WTC11 (cell line): ENCODE measurements at regions of chr22 and their contacts with region 1.

Region 1: GRCh38 chr22:38124236-38124974 is 13.9 kb upstream of the BAIAP2L2 start:
- DNase-seq: no peak
- ATAC-seq: peak; percentile 81
- H3K4me3 Mint-ChIP-seq: no peak overlapping the region
- H3K27ac Mint-ChIP-seq: peak overlapping the region; percentile 69
- H3K4me1 Mint-ChIP-seq: peaks cover 7% of the 10 kb centered on the region
- H3K27me3 Mint-ChIP-seq: no peaks in the 10 kb centered on the region
- CTCF ChIP-seq: no peak

Region 2: DNA sequence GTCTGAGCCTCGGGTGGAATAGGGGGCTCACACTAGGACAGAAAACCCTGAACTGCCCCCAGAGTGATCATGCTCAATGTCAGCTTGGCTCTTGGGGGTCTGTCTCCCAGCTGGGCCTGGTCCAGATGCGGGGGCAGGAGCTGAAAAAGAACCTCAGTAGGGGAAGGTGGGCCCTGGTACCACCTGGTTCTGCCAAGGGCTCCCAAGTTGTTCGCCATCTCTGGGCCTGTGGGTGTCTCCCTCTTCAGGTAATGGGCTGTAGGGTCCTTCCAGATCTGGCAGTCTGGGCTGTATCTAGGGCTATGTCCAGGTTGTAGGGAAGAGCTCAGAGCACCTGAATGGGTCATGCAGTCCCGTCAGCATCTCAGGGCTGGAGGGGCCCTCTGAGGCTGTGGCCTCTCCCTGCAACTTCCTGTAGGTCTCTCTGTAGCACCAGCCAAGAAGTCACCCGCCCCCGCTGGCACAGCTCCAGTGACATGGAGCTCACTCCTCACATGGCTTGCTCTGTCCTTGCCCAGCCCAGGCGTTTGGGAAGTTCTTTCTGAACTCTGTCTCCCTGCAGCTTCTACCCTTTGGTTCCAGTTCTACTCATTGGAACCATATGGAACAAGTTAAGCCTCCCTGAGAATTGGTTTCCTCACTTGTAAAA is 107.0 kb before region 1 on chr22:
- CTCF ChIA-PET with region 1: no interaction called
- POLR2A ChIA-PET with region 1: no interaction called
- DNase-seq: no peak
- ATAC-seq: peak; percentile 26
- H3K4me3 Mint-ChIP-seq: no peak overlapping the region
- H3K27ac Mint-ChIP-seq: no peak overlapping the region
- H3K4me1 Mint-ChIP-seq: 0 out of 2 replicates have a peak, but pooled peaks cover 4% of the 10 kb centered on the region
- H3K27me3 Mint-ChIP-seq: peaks cover 12% of the 10 kb centered on the region
- CTCF ChIP-seq: no peak

Region 3: DNA sequence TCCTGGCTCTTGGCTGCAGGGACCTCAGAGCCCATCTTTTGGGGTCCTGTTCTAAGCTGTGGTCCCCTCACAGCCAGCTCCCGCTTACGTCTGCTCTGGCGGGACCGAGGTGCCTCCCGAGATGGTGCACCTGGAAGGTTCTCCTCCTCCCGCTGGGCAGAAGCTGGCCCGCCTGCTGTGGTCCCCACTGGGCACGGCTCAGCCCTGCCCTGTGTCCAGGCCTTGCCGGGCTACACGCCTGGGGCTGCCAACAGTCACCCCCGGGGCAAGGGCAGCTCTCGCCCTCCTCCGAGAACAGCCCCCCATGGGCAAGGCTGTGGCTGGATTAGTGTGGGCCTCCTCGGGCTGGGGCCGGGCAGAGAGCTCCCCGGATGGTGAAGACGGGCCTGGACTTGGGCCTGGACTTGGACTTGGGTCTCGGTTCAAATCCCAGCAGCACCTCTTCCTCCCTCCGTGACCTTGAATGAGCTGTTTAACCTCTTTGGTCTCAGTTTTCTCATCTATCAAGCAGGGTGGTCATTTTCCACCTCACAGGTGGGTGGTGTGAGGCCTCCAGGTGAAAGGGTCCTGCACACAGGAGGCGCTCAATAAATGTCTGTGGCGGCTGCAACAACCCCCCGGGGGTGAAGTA is 14.9 kb before region 1 on chr22:
- CTCF ChIA-PET with region 1: interaction called, 46 read pairs
- POLR2A ChIA-PET with region 1: no interaction called
- DNase-seq: no peak
- ATAC-seq: no peak
- H3K4me3 Mint-ChIP-seq: no peak overlapping the region
- H3K27ac Mint-ChIP-seq: no peak overlapping the region
- H3K4me1 Mint-ChIP-seq: peaks cover 6% of the 10 kb centered on the region
- H3K27me3 Mint-ChIP-seq: no peaks in the 10 kb centered on the region; the same call in 1 of the 2 replicates
- CTCF ChIP-seq: no peak

Region 4: GRCh38 chr22:38136584-38136983 is 12.2 kb after region 1 on chr22:
- CTCF ChIA-PET with region 1: interaction called, 11 read pairs
- POLR2A ChIA-PET with region 1: no interaction called
- DNase-seq: no peak
- ATAC-seq: no peak
- H3K4me3 Mint-ChIP-seq: no peak overlapping the region
- H3K27ac Mint-ChIP-seq: no peak overlapping the region
- H3K4me1 Mint-ChIP-seq: no peaks in the 10 kb centered on the region
- H3K27me3 Mint-ChIP-seq: no peaks in the 10 kb centered on the region
- CTCF ChIP-seq: no peak

Region 5: DNA sequence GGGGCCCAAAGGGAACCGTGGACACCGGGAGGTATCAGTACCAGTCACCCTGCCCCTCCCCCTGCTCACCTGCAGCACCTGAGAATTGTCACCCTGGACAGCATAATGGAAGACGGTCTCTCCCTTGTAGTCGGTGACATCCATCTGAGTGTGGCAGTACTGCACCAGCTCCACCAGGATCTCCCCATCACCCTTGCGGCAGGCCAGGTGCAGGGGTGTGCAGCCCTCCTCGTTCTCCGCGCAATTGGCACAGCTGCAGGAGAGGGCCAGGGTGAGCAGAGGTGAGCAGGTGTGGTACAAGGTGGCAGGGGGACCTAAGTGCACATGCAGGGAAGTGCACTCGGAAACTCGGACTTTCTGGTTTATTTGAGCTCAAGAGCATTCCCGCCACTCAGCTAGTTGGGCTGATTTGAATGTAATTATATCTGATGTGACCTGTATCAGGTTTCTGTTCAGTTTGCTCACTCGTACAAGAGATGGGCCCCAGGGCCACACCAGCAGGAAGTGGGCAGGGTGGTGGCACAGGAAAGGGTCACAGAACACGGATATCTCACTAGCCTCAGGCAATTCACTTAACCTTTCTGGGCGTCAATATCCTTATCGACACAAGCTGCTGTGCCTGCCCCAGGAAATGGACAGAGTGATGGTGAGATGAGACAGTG is 18.8 kb after region 1 on chr22:
- CTCF ChIA-PET with region 1: interaction called, 28 read pairs
- POLR2A ChIA-PET with region 1: no interaction called
- DNase-seq: no peak
- ATAC-seq: no peak
- H3K4me3 Mint-ChIP-seq: no peak overlapping the region
- H3K27ac Mint-ChIP-seq: peak overlapping the region; percentile 43
- H3K4me1 Mint-ChIP-seq: peaks cover 9% of the 10 kb centered on the region
- H3K27me3 Mint-ChIP-seq: no peaks in the 10 kb centered on the region
- CTCF ChIP-seq: no peak